IMR-90 (cell line): ENCODE measurements at regions of chr7 and their contacts with region 1.

Region 1: GRCh38 chr7:84194543-84195271 is at the start of gene SEMA3A:
- DNase-seq: peak; percentile 94
- ATAC-seq: peak; percentile 68
- H3K4me3 ChIP-seq: peak within 1 kb of the TSS; percentile 84
- H3K27ac ChIP-seq: peak within 1 kb of the TSS; percentile 88
- H3K4me1 ChIP-seq: no peaks in the 10 kb centered on the region
- H3K27me3 ChIP-seq: no peaks in the 10 kb centered on the region
- CTCF ChIP-seq: 0 out of 2 replicates have a peak, but pooled peaks have one; percentile 6
- POLR2A ChIP-seq: peak; percentile 73; the same call in 1 of the 2 replicates
- RAD21 ChIP-seq: no peak
- total RNA-seq, gene SEMA3A: 187 and 213 TPM in 2 replicates

Region 2: GRCh38 chr7:82841828-82842227 is 1352.9 kb before region 1 on chr7:
- CTCF ChIA-PET with region 1: no interaction called
- POLR2A ChIA-PET with region 1: no interaction called
- dilution Hi-C with region 1: no loop called
- in situ Hi-C with region 1: no loop called
- intact Hi-C with region 1: no loop called
- DNase-seq: no peak
- ATAC-seq: no peak
- H3K4me3 ChIP-seq: no peak overlapping the region
- H3K27ac ChIP-seq: no peak overlapping the region
- H3K4me1 ChIP-seq: no peaks in the 10 kb centered on the region
- H3K27me3 ChIP-seq: no peaks in the 10 kb centered on the region; the same call in 1 of the 2 replicates
- CTCF ChIP-seq: no peak
- POLR2A ChIP-seq: no peak
- RAD21 ChIP-seq: no peak

Region 3: DNA sequence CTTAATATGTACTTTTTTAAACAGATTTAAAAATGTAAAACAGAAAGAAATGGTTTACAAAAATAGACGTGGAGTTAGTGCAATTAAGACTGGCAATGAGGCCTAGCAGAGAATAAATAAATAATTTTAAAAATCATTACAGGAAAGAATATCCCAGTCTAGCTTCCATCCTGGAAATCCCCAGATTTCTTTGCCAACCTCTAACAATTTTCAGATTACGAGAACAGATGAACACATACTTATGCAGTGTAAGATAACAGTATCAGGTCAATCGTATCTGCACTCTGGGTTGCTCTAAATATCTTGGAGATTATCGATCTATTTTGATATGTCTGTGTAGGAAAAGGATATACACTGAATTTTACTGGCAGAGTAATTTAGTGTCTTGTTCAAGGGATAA is 210.6 kb before region 1 on chr7:
- CTCF ChIA-PET with region 1: no interaction called
- POLR2A ChIA-PET with region 1: no interaction called
- dilution Hi-C with region 1: no loop called
- in situ Hi-C with region 1: loop called (anchors 10 kb)
- intact Hi-C with region 1: no loop called
- DNase-seq: peak; percentile 28
- ATAC-seq: no peak
- H3K4me3 ChIP-seq: no peak overlapping the region
- H3K27ac ChIP-seq: no peak overlapping the region; the same call in 1 of the 2 replicates
- H3K4me1 ChIP-seq: no peaks in the 10 kb centered on the region; the same call in 1 of the 2 replicates
- H3K27me3 ChIP-seq: no peaks in the 10 kb centered on the region
- CTCF ChIP-seq: no peak
- POLR2A ChIP-seq: no peak
- RAD21 ChIP-seq: no peak

Region 4: DNA sequence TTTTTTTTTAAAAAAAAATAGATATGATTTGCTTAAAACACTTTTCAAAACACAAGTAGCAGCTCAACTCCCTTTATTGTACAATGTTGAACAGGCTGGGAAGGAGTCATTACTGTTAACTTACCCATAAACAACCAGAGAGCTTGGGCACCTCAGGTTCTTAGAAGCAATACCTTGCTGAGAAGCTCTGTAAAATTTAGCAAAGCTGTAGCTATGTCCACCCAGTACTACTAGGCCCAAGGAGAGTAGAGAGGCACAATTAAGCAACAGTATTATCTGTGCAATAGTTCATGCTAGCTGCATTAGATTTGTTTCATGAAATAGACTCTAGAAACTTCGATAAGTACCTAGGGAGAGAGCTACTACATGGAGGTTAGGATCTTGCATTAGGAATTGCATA is 32.1 kb before region 1 on chr7:
- CTCF ChIA-PET with region 1: no interaction called
- POLR2A ChIA-PET with region 1: interaction called, 23 read pairs
- dilution Hi-C with region 1: no loop called
- in situ Hi-C with region 1: no loop called
- intact Hi-C with region 1: no loop called
- DNase-seq: no peak
- ATAC-seq: no peak; the same call in 1 of the 2 replicates
- H3K4me3 ChIP-seq: no peak overlapping the region
- H3K27ac ChIP-seq: no peak overlapping the region
- H3K4me1 ChIP-seq: peaks cover 2% of the 10 kb centered on the region; the same call in 1 of the 2 replicates
- H3K27me3 ChIP-seq: no peaks in the 10 kb centered on the region
- CTCF ChIP-seq: no peak
- POLR2A ChIP-seq: no peak
- RAD21 ChIP-seq: no peak

Region 5: DNA sequence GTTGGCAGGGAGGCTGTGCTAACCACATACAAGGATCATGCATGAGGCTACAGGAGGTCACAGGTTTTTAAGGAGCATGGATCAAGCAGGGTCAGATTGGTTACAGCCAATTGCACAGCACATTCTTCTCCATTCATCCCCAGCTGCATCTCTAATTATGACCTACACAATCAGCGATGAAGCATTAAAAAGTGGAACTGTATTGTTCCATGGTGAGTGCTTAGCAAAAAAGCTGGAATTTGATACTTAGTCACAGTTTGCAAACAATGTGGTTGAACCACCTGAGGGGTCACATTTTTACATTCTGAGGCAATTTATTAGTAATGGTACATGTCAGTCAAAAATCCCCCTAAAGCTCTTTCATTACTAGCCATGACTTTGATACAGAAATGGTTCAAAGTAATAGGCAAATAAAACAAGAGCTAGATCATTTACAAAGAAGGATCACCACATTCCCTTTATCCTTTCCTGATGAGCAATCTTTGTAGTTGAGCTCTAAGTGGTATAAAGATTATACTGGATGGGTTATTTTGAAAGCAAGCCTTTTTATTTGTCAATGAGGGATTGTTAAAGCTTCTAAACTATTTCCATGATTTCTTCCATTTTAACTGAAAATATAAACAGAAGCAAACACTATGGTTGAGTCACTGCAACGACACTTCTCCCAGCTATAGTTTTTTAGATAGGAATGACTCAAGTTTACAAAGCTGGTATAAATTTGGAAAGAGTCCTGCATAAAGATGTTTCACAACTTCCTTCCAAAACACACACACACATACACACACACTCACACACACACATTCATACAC is 217.7 kb after region 1 on chr7:
- CTCF ChIA-PET with region 1: no interaction called
- POLR2A ChIA-PET with region 1: no interaction called
- dilution Hi-C with region 1: no loop called
- in situ Hi-C with region 1: no loop called
- intact Hi-C with region 1: loop called (anchors 2 kb)
- DNase-seq: peak; percentile 99
- ATAC-seq: peak; percentile 87
- H3K4me3 ChIP-seq: peak overlapping the region; percentile 1; the same call in 1 of the 2 replicates
- H3K27ac ChIP-seq: peak overlapping the region; percentile 76
- H3K4me1 ChIP-seq: peaks cover 7% of the 10 kb centered on the region
- H3K27me3 ChIP-seq: no peaks in the 10 kb centered on the region
- CTCF ChIP-seq: no peak
- POLR2A ChIP-seq: no peak
- RAD21 ChIP-seq: no peak

Region 6: GRCh38 chr7:84510505-84510904 is 315.8 kb after region 1 on chr7:
- CTCF ChIA-PET with region 1: no interaction called
- POLR2A ChIA-PET with region 1: no interaction called
- dilution Hi-C with region 1: no loop called
- in situ Hi-C with region 1: no loop called
- intact Hi-C with region 1: loop called (anchors 10 kb)
- DNase-seq: peak; percentile 78
- ATAC-seq: peak; percentile 63
- H3K4me3 ChIP-seq: no peak overlapping the region
- H3K27ac ChIP-seq: 0 out of 2 replicates have a peak overlapping the region, but pooled peaks have one; percentile 11
- H3K4me1 ChIP-seq: peaks cover 9% of the 10 kb centered on the region
- H3K27me3 ChIP-seq: no peaks in the 10 kb centered on the region
- CTCF ChIP-seq: no peak
- POLR2A ChIP-seq: no peak
- RAD21 ChIP-seq: no peak

Region 7: DNA sequence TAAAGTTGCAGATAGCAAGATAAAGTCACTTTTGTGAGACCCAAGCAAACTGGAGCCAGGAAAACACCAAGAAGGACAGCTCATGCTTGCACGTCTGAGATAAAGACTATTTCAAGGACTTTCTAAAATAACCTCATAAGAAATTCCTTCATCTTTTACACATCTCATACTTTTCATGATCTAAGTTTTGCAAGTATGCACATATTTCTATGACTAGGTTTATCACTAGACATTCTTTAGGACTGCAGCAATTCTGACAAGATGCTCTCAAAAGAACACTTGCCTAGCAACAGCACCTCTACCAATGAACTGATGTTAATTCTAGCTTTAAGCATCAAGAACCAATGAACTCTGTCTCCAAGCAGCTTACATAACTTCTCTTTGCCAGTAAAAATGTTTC is 534.6 kb after region 1 on chr7:
- CTCF ChIA-PET with region 1: no interaction called
- POLR2A ChIA-PET with region 1: no interaction called
- dilution Hi-C with region 1: no loop called
- in situ Hi-C with region 1: no loop called
- intact Hi-C with region 1: loop called (anchors 10 kb)
- DNase-seq: peak; percentile 91
- ATAC-seq: peak; percentile 94
- H3K4me3 ChIP-seq: no peak overlapping the region
- H3K27ac ChIP-seq: no peak overlapping the region
- H3K4me1 ChIP-seq: no peaks in the 10 kb centered on the region
- H3K27me3 ChIP-seq: no peaks in the 10 kb centered on the region
- CTCF ChIP-seq: no peak
- POLR2A ChIP-seq: no peak
- RAD21 ChIP-seq: no peak

Region 8: DNA sequence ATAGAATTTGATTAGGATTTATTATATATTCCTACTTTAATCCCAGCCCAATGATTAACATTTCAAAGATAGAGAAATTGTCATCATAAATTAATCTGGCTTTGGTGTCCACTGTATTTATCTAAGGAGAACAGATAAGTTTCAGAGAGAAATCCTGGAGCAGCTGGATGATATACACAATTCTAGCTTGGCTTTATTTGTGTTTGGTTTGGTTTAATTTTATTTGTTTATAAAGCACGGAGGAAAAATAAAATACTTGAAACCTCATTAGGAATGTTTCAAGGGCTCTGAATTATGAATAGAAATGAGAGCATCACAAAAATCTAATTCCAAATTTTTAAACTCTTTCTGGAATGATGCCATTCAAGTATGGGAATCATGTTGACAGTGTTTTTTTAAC is 950.1 kb after region 1 on chr7:
- CTCF ChIA-PET with region 1: no interaction called
- POLR2A ChIA-PET with region 1: no interaction called
- dilution Hi-C with region 1: no loop called
- in situ Hi-C with region 1: no loop called
- intact Hi-C with region 1: no loop called
- DNase-seq: no peak
- ATAC-seq: no peak
- H3K4me3 ChIP-seq: no peak overlapping the region
- H3K27ac ChIP-seq: no peak overlapping the region
- H3K4me1 ChIP-seq: no peaks in the 10 kb centered on the region
- H3K27me3 ChIP-seq: no peaks in the 10 kb centered on the region
- CTCF ChIP-seq: no peak
- POLR2A ChIP-seq: no peak
- RAD21 ChIP-seq: no peak

Region 9: DNA sequence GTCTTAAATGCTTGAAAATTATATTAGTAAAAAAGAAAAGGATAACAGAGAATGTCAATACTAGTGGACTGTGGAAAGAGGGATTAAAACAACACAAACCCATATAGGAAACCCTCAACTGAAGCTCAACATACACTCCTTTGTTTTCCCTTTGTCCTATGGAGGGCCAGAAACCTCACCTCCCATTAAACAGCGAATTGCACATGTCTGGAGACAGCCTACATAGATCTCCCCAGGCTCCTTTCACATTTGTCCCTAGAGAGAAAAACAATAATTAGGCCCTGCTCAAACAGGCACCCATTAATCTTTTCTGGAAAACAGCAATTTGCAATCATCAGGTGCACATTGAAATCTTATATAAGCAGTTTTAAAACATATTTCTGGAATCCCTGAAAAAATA is 1079.7 kb after region 1 on chr7:
- CTCF ChIA-PET with region 1: no interaction called
- POLR2A ChIA-PET with region 1: no interaction called
- dilution Hi-C with region 1: no loop called
- in situ Hi-C with region 1: no loop called
- intact Hi-C with region 1: no loop called
- DNase-seq: no peak
- ATAC-seq: no peak
- H3K4me3 ChIP-seq: no peak overlapping the region
- H3K27ac ChIP-seq: no peak overlapping the region
- H3K4me1 ChIP-seq: no peaks in the 10 kb centered on the region
- H3K27me3 ChIP-seq: no peaks in the 10 kb centered on the region; the same call in 1 of the 2 replicates
- CTCF ChIP-seq: no peak
- POLR2A ChIP-seq: no peak
- RAD21 ChIP-seq: no peak